Ascending aorta (tissue), 2 donors: ENCODE measurements at regions of chr17 and their contacts with region 1.

Region 1: GRCh38 chr17:43125133-43125966 is at the start of gene BRCA1:
- DNase-seq: peak; percentile 92 to 97
- H3K4me3 ChIP-seq: peak within 1 kb of the TSS; percentile 69 to 76
- H3K27ac ChIP-seq: peak within 1 kb of the TSS; percentile 73 to 87
- H3K4me1 ChIP-seq: peaks cover 0 to 25% of the 10 kb centered on the region in 2 donors
- H3K27me3 ChIP-seq: no peaks in the 10 kb centered on the region
- CTCF ChIP-seq: no peak
- total RNA-seq, gene BRCA1: 0.85 TPM

Region 2: DNA sequence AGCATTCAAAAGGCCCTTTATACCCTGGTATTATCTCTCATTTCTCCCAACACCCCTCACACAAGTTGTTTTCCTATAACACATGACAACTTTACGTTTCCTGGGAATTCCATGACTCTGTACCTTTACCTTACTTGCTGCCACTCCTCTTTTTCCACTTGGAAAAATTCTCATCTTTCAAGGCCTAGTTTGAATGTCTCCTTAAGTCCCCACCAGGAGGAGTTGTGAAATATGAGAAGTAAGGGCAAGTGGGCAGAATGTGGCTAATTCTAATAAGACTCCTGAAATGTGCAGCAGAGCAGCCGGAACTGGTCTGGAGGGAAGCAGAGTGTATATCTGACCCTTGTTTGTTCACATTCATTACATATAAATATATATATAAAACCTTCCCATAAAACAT is 39.9 kb before region 1 on chr17:
- intact Hi-C with region 1: loop called (anchors 1 kb)
- DNase-seq: no peak
- H3K4me3 ChIP-seq: no peak overlapping the region
- H3K27ac ChIP-seq: peak overlapping the region; percentile 69 to 84
- H3K4me1 ChIP-seq: peaks cover 0 to 7% of the 10 kb centered on the region in 2 donors
- H3K27me3 ChIP-seq: no peaks in the 10 kb centered on the region
- CTCF ChIP-seq: no peak

Region 3: GRCh38 chr17:43170766-43171585 is 45.6 kb after region 1 on chr17 and contains the start of gene NBR1:
- intact Hi-C with region 1: loop called (anchors 1 kb)
- DNase-seq: peak; percentile 95 to 98
- H3K4me3 ChIP-seq: peak within 1 kb of the TSS; percentile 76 to 82
- H3K27ac ChIP-seq: peak within 1 kb of the TSS; percentile 97 to 99
- H3K4me1 ChIP-seq: peaks cover 0 to 41% of the 10 kb centered on the region in 2 donors
- H3K27me3 ChIP-seq: no peaks in the 10 kb centered on the region
- CTCF ChIP-seq: no peak
- total RNA-seq, gene NBR1: 45.6 TPM